Left ventricle myocardium inferior (tissue), 1 donor: ENCODE measurements at regions of chr9 and their contacts with region 1.

Region 1: DNA sequence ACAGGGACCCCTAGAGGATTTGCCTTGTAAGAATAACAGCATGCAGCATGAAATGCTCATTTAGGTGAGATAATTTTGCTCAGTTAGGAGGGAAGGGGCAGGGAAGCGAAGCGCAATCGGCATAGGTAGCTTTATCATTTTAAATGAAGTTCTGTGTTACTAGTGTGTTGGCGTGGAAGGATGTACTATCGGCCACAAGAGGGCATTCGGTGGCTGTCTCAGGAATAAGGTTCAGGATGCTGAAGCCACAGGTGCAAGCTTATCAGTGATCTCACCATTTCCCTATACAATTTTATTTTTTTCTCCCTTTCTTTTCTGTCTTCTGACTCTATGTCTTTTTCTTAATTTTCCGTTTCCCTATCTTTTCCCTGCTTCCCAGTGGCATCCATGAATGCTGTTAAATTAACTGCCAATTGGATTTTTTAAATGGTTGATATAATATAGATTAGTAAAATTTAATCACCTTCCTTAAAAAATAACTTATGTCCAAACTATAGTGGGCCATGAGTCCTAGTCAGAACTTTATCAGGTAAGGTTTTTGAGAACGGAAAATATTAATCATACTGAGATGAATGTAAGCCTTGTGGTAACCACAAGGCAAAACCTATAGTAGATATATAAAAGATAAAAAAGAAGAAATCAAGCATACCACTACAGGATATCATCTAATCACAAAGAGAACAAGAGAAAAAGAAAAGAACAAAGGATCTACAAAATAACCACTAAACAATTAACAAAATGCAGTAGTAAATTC is 1.2 kb upstream of the INSL6 start:
- DNase-seq: no peak
- H3K4me3 ChIP-seq: no peak overlapping the region
- H3K27ac ChIP-seq: no peak overlapping the region
- H3K4me1 ChIP-seq: no peaks in the 10 kb centered on the region
- H3K27me3 ChIP-seq: peaks cover 10% of the 10 kb centered on the region
- CTCF ChIP-seq: peak; percentile 79

Region 2: DNA sequence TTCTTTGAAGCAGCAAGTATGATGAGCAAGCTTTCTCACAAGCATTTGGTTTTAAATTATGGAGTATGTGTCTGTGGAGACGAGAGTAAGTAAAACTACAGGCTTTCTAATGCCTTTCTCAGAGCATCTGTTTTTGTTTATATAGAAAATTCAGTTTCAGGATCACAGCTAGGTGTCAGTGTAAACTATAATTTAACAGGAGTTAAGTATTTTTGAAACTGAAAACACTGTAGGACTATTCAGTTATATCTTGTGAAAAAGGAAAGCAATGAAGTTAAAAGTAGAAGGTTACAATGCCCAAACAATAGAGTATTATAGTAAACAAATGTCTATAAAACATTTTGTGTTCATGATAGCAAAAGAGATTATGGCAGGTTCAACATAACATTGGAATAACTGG is 112.9 kb before region 1 on chr9:
- intact Hi-C with region 1: no loop called
- DNase-seq: no peak
- H3K4me3 ChIP-seq: no peak overlapping the region
- H3K27ac ChIP-seq: no peak overlapping the region
- H3K4me1 ChIP-seq: peaks cover 11% of the 10 kb centered on the region
- H3K27me3 ChIP-seq: no peaks in the 10 kb centered on the region
- CTCF ChIP-seq: no peak

Region 3: DNA sequence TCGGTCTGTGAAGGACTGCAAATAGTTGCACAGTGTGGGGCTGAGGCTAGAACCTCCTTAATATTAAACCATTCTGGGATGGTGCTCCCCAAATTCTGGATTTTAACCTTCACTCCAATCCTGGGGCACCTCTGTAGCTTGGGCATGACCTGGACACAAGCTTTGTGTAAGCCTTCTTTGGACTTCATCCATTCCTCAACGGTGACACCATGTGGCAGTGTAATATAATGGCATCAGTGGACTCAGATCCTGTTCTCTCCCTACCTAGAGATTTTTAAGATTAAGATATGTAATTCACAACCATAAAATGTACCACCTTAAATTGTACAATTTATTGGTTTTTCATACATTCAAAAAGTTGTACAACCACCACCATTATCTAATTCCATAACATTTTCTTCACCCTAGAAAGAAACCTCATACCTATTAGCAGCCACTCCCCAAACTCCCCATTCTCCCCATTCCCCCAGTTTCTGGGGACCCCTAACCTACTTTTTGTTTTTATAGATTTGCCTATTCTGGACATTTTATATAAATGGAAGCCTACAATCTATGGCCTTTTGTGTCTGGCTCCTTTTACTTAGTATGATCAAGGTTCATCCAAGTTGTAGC is 255.9 kb after region 1 on chr9:
- intact Hi-C with region 1: loop called (anchors 5 kb)
- DNase-seq: no peak
- H3K4me3 ChIP-seq: no peak overlapping the region
- H3K27ac ChIP-seq: no peak overlapping the region
- H3K4me1 ChIP-seq: peaks cover 12% of the 10 kb centered on the region
- H3K27me3 ChIP-seq: no peaks in the 10 kb centered on the region
- CTCF ChIP-seq: peak; percentile 63